ENCODE measurements at regions of chr3 and their contacts with region 1.

Region 1: DNA sequence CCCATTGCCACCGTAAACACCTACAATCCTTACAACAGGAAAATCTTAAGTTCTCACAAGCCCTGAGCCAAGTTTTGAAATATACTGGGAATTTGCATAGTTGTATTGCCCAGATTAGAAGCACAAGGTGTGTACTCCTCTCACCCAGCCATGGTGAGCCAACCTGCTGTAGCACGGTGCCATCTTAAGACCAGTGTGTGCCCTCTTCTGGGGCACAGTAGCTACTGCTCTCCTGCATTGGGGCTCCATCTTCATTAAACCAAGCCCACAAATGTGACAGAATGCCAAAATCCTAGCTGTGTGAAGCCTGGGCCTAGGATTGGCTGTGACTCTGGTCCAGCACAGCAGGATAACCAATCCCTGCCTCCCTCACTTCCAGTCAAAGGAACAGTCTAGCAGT is 140.8 kb upstream of the MME start:
- DNase-seq: no peak
- H3K4me3 ChIP-seq: no peak overlapping the region
- H3K27me3 ChIP-seq: no peaks in the 10 kb centered on the region
- CTCF ChIP-seq: no peak

Region 2: DNA sequence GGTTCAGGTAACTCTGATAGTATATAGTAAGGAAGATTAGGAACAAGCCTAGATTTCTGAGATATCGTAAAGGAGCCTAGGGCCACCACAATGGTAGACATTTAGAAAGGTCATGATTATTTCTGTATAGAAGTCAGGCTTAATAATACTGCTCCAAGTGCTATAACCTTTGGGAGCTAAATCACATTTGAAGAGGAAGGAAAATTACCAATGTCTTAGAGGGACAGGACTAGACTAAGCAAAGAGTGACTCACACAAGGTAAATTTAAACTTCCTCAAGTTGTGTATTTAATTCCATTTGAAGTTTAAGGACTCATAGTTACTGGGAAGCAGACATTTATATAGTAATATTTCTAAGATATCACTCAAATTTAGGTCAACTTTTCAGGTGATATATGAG is 86.9 kb before region 1 on chr3:
- CTCF ChIA-PET with region 1: no interaction called
- POLR2A ChIA-PET with region 1: no interaction called
- DNase-seq: no peak
- H3K4me3 ChIP-seq: no peak overlapping the region
- H3K27me3 ChIP-seq: no peaks in the 10 kb centered on the region
- CTCF ChIP-seq: no peak

Region 3: DNA sequence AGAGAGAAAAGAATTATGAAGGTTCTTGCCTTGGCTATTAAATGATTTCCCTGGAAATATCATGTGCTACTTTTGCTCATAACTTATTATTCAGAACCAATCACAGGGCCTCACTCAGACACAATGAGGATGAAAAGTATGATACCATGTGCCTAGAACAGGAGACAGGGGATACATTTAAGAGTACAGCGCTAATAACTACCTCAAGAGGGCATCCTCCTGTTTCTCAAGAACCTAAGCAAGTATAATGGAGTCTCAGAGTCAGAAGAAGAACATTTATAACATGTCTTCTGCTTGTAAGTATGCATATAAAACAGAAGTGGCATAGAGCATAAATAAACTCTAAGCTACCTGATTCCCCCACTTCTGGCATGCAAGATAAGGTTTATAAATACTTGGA is 15.4 kb after region 1 on chr3:
- CTCF ChIA-PET with region 1: interaction called, 17 read pairs
- POLR2A ChIA-PET with region 1: no interaction called
- DNase-seq: no peak
- H3K4me3 ChIP-seq: no peak overlapping the region
- H3K27me3 ChIP-seq: no peaks in the 10 kb centered on the region
- CTCF ChIP-seq: peak; percentile 58

Region 4: GRCh38 chr3:155323063-155323666 is 383.8 kb after region 1 on chr3:
- CTCF ChIA-PET with region 1: no interaction called
- POLR2A ChIA-PET with region 1: no interaction called
- DNase-seq: peak; percentile 46
- H3K4me3 ChIP-seq: no peak overlapping the region
- H3K27me3 ChIP-seq: no peaks in the 10 kb centered on the region
- CTCF ChIP-seq: peak; percentile 76